Activated CD4-positive, alpha-beta T cell treated with anti-CD3 and anti-CD28 coated beads for 36 hours (primary cell): ENCODE measurements at regions of chr2 and their contacts with region 1.

Region 1: GRCh38 chr2:111120253-111121027 is at the start of gene BCL2L11:
- DNase-seq: peak; percentile 93
- ATAC-seq: peak; percentile 67
- H3K4me3 Mint-ChIP-seq: peak within 1 kb of the TSS; percentile 90
- H3K27ac Mint-ChIP-seq: peak within 1 kb of the TSS; percentile 85
- H3K4me1 Mint-ChIP-seq: peaks cover 60% of the 10 kb centered on the region
- H3K27me3 Mint-ChIP-seq: peaks cover 18% of the 10 kb centered on the region
- total RNA-seq, gene BCL2L11: 18.2 to 28.6 TPM

Region 2: GRCh38 chr2:110677530-110678456 is 442.6 kb before region 1 on chr2 and contains the start of gene BUB1:
- CTCF ChIA-PET with region 1: no interaction called
- POLR2A ChIA-PET with region 1: no interaction called
- intact Hi-C with region 1: loop called in 1 of 2 experiments (anchors 5 kb)
- DNase-seq: peak; percentile 98
- ATAC-seq: peak; percentile 99
- H3K4me3 Mint-ChIP-seq: peak within 1 kb of the TSS; percentile 96
- H3K27ac Mint-ChIP-seq: peak within 1 kb of the TSS; percentile 97
- H3K4me1 Mint-ChIP-seq: peaks cover 30% of the 10 kb centered on the region
- H3K27me3 Mint-ChIP-seq: peaks cover 4% of the 10 kb centered on the region
- total RNA-seq, gene BUB1: 93.5 to 115 TPM

Region 3: DNA sequence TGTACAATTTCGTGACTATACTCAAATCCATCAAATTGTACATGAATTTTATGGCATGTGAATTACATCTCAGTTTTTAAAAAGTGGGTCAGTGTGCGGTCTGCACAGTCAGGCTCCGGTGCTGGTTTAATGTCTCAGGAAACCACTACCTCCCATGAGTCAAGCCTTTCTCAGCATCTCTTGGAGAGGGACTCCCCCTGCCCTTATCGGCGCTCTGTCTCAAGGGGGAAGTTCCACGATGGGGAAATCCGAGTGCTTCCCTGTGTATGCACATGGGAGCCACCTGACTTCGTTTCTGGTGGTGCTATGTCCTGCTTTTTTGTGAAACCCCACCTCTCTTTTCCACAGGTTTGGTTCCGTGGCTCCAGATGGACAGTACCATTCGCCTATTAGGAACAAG is 315.5 kb before region 1 on chr2:
- CTCF ChIA-PET with region 1: no interaction called
- POLR2A ChIA-PET with region 1: no interaction called
- intact Hi-C with region 1: loop called (anchors 2 kb)
- DNase-seq: peak; percentile 80
- ATAC-seq: peak; percentile 99
- H3K4me3 Mint-ChIP-seq: no peak overlapping the region
- H3K27ac Mint-ChIP-seq: no peak overlapping the region
- H3K4me1 Mint-ChIP-seq: peaks cover 15% of the 10 kb centered on the region
- H3K27me3 Mint-ChIP-seq: peaks cover 57% of the 10 kb centered on the region

Region 4: DNA sequence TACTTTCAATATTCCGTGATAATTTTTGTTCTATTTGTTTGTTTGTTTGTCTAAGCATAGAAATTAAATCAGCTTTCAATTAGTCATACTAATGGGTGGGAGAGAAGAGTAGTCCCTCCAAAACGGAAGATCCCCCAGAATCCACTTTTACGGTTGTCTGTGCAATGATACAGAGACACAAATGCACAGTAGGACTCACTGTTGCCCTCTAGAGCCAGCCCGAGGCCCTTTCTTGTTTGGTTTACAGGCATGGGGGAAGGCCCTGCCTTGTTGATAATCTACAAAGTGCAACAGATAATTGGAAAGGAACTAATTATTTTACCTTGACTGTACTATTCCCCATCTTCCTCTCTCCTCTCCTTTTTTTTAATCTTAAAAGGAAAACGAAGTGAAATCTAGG is 266.9 kb before region 1 on chr2:
- CTCF ChIA-PET with region 1: no interaction called
- POLR2A ChIA-PET with region 1: no interaction called
- intact Hi-C with region 1: loop called in 1 of 2 experiments (anchors 2 kb)
- DNase-seq: peak; percentile 79
- ATAC-seq: peak; percentile 53
- H3K4me3 Mint-ChIP-seq: no peak overlapping the region
- H3K27ac Mint-ChIP-seq: no peak overlapping the region
- H3K4me1 Mint-ChIP-seq: peaks cover 45% of the 10 kb centered on the region
- H3K27me3 Mint-ChIP-seq: peaks cover 61% of the 10 kb centered on the region

Region 5: GRCh38 chr2:111091811-111092211 is 28.6 kb before region 1 on chr2:
- CTCF ChIA-PET with region 1: no interaction called
- POLR2A ChIA-PET with region 1: no interaction called
- intact Hi-C with region 1: loop called (anchors 1 kb)
- DNase-seq: peak; percentile 42
- ATAC-seq: peak; percentile 98
- H3K4me3 Mint-ChIP-seq: no peak overlapping the region
- H3K27ac Mint-ChIP-seq: no peak overlapping the region
- H3K4me1 Mint-ChIP-seq: peaks cover 16% of the 10 kb centered on the region
- H3K27me3 Mint-ChIP-seq: peaks cover 50% of the 10 kb centered on the region

Region 6: GRCh38 chr2:111168528-111169239 is 48.2 kb after region 1 on chr2:
- CTCF ChIA-PET with region 1: interaction called, 3 read pairs
- POLR2A ChIA-PET with region 1: interaction called, 14 read pairs
- intact Hi-C with region 1: loop called (anchors 1 to 5 kb)
- DNase-seq: peak; percentile 88
- ATAC-seq: peak; percentile 98
- H3K4me3 Mint-ChIP-seq: no peak overlapping the region
- H3K27ac Mint-ChIP-seq: no peak overlapping the region
- H3K4me1 Mint-ChIP-seq: peaks cover 24% of the 10 kb centered on the region
- H3K27me3 Mint-ChIP-seq: peaks cover 21% of the 10 kb centered on the region